Endothelial cell of umbilical vein (primary cell): ENCODE measurements at regions of chr17 and their contacts with region 1.

Region 1: DNA sequence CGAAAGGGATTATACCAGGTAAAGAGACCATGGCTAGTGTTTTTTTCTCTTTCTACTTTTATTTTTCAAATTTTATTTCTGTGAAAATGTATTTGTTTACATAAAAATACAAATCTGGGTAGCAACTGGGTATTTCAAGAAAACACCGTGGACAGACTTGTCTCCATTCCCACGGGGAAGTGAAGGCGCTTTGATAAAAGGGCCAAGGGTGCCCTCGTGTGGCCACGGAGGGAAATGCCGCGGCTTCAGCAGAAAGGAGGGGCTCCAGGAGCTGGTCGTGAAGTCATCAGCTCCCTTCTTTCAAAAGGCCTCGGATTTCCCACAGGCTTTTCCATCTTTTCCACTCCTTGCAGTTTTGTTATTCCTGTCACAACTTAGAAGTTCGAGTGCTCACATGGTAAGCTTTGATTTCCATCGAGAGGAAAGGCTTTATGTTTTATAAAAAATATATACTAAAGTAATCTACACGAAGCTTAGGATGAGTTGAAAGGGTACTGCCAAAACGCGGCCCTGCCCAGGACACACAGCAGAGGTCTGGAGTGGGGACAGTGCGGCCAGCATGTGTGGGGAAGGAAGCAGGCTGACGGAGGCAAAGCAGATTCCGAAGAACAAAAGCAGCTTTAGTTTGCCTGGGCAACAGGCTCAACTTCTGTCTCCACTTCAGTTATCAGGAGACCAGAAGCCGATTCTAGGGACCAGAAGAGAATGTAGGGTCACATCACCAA is 15.3 kb upstream of the MNT start:
- DNase-seq: peak; percentile 94
- H3K4me3 ChIP-seq: no peak overlapping the region
- H3K27ac ChIP-seq: peak overlapping the region; percentile 32
- H3K4me1 ChIP-seq: no peaks in the 10 kb centered on the region
- H3K27me3 ChIP-seq: no peaks in the 10 kb centered on the region
- CTCF ChIP-seq: peak; percentile 88 to 92
- POLR2A ChIP-seq: no peak

Region 2: DNA sequence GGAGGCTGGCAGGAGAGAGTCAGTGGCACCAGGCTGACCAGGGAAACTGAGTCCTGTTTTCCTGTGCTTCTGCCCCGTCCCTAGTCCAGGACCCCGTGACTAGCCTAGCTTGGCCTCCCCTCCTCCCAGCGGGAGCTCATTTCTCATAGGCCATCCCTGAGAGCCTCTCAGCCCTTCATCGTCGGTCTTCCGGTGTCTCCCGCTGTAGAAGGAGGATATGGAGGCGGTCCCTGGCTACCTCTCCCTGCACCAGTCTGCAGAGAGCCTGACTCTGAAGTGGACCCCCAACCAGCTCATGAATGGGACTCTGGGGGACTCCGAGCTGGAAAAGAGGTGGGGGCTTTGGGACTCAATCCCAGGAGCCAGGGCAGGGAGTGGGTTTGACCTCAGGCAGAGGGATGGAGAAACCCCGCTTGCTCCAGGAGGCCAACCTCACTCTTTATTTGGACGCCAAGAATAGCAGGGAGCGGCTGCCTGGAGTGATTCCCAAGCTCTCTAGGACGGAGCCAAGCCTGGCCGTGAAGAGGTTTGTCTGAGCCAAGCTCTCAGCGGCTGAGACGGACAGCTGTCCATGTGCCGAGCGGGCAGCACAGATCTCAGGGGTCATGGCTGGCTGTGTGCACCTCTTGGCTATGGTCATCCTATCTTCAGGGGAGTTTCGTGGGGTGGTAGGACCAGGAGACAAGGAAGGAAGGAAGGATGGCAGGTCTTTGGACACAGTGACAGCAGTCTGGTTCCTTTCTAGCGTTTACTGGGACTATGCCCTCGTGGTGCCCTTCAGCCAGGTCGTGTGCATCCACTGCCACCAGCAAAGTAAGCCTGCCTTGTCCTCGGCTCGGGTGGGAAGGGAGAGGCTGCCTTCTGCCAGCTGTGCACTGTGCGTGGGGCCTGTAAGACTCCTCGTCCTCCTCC is 52.1 kb before region 1 on chr17:
- CTCF ChIA-PET with region 1: interaction called, 29 read pairs
- POLR2A ChIA-PET with region 1: no interaction called
- dilution Hi-C with region 1: no loop called
- intact Hi-C with region 1: loop called (anchors 1 kb)
- DNase-seq: no peak
- H3K4me3 ChIP-seq: no peak overlapping the region
- H3K27ac ChIP-seq: no peak overlapping the region
- H3K4me1 ChIP-seq: peaks cover 17% of the 10 kb centered on the region
- H3K27me3 ChIP-seq: no peaks in the 10 kb centered on the region
- CTCF ChIP-seq: no peak
- POLR2A ChIP-seq: no peak

Region 3: DNA sequence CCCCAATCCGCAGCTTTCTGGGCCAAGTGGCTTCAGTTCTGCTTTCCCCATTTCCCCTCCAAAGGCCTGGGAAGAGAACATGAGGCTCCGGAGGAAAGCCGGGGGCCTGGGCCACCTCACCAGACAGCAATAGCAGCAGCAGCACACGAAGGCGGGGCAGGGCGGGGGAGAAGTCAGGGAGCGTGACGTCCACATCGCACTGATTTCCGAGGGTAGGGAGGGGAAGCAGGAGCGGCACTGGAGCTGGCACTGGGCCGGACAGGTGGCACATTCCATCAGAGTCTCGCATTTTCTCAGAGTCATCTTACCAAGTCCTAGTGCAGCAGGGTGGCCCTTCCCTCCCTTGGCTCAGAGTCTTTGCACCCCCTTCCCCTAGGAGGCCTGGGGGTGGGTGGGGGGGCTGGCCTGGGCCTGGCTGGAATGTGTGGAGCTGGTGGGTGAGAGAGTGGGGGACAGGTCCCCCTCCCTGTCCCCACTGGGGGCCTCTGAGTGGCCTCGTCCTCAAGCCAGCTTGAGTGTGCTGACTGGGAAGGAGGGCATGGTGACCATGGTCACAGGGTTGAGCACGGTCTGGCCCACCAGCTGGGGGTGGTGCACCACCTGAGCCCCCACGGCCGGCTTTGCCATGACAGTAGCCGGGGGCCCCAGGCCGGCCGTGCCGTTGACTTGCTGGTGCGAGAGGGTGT is 29.6 kb before region 1 on chr17:
- CTCF ChIA-PET with region 1: interaction called, 909 read pairs
- POLR2A ChIA-PET with region 1: interaction called, 12 read pairs
- dilution Hi-C with region 1: no loop called
- intact Hi-C with region 1: loop called (anchors 1 kb)
- DNase-seq: no peak
- H3K4me3 ChIP-seq: no peak overlapping the region
- H3K27ac ChIP-seq: no peak overlapping the region
- H3K4me1 ChIP-seq: peaks cover under 1% of the 10 kb centered on the region
- H3K27me3 ChIP-seq: no peaks in the 10 kb centered on the region
- CTCF ChIP-seq: no peak
- POLR2A ChIP-seq: no peak

Region 4: GRCh38 chr17:2401426-2402221 is 14.5 kb before region 1 on chr17:
- CTCF ChIA-PET with region 1: interaction called, 50 read pairs
- POLR2A ChIA-PET with region 1: no interaction called
- dilution Hi-C with region 1: no loop called
- intact Hi-C with region 1: loop called (anchors 2 kb)
- DNase-seq: peak; percentile 100
- H3K4me3 ChIP-seq: peak overlapping the region; percentile 11 to 69 (median 51)
- H3K27ac ChIP-seq: peak overlapping the region; percentile 99
- H3K4me1 ChIP-seq: peaks cover 43% of the 10 kb centered on the region
- H3K27me3 ChIP-seq: no peaks in the 10 kb centered on the region
- CTCF ChIP-seq: no peak
- POLR2A ChIP-seq: no peak

Region 5: DNA sequence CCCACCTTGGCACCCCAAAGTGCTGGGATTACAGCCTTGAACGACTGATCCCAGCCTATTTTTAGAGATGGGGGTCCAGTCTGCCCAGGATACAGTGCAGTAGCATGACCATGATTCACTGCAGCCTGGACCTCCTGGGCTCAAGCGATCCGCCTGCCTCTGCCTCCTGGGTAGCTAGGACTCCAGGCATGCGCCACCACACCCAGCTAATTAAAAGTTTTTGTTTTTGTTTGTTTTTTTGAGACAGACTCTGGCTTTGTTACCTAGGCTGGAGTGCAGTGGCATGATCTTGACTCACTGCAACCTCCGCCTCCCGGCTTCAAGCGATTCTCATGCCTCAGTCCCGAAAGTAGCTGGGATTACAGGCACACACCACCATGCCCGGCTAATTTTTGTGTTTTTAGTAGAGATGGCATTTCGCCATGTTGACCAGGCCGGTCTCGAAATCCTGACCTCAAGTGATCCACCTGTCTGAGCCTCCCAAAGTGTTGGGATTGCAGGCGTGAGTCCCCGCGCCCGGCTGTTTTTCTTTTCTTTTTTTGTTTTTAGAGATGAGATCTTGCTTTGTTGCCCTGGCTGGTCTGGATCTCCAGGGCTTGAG is 175.0 kb after region 1 on chr17:
- CTCF ChIA-PET with region 1: no interaction called
- POLR2A ChIA-PET with region 1: no interaction called
- dilution Hi-C with region 1: no loop called
- intact Hi-C with region 1: no loop called
- DNase-seq: no peak
- H3K4me3 ChIP-seq: no peak overlapping the region
- H3K27ac ChIP-seq: no peak overlapping the region
- H3K4me1 ChIP-seq: peaks cover 15% of the 10 kb centered on the region
- H3K27me3 ChIP-seq: peaks cover 0 to under 1% of the 10 kb centered on the region in 2 experiments
- CTCF ChIP-seq: no peak
- POLR2A ChIP-seq: no peak